BJ (cell line): ENCODE measurements at regions of chr13 and their contacts with region 1.

Region 1: DNA sequence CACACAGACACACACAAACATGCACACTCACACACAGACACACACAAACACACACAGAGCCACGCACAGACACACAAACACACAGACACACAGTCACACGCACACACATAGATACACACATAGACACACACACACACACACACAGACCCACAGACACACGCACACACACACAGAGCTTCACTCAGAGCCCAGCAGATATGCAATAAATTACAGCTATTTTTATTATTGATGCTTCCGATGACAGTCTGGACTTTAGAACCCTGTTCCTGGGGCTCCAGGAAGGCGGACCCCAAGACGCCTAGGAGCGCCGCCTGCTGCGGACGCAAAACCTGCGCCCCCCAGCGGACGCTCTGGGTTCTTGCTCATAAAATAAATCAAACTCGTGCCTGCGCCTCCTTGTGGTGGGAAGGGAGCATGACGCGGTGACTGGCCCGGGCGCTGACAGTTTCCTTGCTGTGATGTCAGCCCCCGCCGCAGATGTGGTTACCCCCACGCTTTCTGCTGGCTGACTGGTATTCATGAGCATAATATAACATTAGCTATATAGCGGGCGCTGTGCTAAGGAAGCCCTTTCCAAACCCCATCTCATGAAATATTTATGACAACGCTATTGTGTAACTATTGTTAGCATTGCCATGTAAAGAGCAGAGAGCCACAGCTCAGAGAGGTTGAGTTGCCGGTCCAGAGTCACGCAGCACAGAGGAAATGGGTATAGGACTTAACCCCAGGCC is 64.4 kb upstream of the TM9SF2 start:
- DNase-seq: no peak
- H3K4me3 ChIP-seq: no peak overlapping the region
- H3K27me3 ChIP-seq: peaks cover 11% of the 10 kb centered on the region
- CTCF ChIP-seq: peak; percentile 100

Region 2: GRCh38 chr13:99269627-99270241 is 167.1 kb before region 1 on chr13:
- CTCF ChIA-PET with region 1: interaction called, 283 read pairs
- POLR2A ChIA-PET with region 1: no interaction called
- DNase-seq: no peak
- H3K4me3 ChIP-seq: no peak overlapping the region
- H3K27me3 ChIP-seq: no peaks in the 10 kb centered on the region
- CTCF ChIP-seq: peak; percentile 74

Region 3: DNA sequence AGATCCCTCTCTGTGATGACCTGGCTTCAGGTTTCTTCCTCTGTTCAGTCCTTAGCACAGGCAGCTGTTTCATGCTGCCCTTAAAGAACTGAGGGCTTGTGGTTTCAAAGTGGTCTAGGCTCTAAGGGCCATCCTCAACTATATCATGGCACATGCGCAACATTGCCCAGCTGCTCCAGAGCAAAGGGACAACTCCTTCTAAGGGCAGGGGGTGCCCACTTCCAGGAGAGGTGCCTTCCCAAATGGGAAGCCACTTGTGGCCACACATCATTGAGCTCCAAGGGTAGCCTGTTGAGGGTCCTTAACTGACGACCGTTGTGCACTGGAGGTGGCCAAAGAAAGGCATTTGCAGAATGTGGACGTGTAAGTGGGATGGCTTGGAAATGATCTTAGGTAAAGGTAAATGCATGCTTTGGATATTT is 136.9 kb before region 1 on chr13:
- CTCF ChIA-PET with region 1: interaction called, 14 read pairs
- POLR2A ChIA-PET with region 1: no interaction called
- DNase-seq: no peak
- H3K4me3 ChIP-seq: no peak overlapping the region
- H3K27me3 ChIP-seq: no peaks in the 10 kb centered on the region
- CTCF ChIP-seq: no peak

Region 4: DNA sequence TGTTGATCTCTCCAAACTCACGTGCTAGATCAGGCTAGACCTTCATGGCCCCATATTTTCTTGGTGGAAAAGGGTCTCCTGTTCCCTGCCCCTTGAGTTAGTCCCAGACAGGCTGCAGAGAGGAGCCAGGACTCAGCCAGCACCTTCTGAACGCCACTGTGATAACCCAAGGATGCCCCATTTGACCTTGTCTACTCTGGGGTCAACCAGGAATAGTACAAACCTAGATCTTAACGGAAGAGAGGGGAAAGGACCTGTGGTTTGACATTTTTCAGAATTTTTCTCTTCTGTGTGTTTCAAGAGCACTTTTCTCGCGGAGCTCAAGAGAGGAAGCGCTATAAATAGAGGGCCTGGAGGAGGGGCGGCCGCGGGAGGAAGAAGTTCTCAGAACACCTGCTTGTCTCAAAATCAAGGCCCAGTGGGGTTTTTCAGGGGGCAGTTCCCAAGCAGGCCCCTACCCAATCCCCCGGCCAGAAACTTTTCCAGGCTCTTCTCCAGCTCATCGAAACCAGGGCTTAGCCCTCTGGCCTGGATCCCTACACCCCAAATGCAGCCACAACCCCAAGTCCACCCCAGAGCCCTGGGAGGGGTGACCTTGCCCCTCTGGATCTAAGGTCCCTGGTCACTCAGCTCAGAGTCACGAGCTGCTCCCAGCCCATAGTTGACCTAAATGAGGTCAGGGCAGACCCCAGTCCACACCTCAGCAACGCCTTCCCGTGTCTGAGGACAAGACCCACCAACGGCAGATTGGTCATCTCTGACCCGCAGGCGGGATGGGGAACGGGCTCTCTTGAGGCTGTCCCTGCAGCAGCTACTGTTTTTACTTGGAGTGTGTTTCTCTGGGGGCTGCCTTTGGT is 11.1 kb before region 1 on chr13:
- CTCF ChIA-PET with region 1: interaction called, 27 read pairs
- POLR2A ChIA-PET with region 1: no interaction called
- DNase-seq: no peak
- H3K4me3 ChIP-seq: no peak overlapping the region
- H3K27me3 ChIP-seq: peaks cover 16% of the 10 kb centered on the region
- CTCF ChIP-seq: no peak

Region 5: DNA sequence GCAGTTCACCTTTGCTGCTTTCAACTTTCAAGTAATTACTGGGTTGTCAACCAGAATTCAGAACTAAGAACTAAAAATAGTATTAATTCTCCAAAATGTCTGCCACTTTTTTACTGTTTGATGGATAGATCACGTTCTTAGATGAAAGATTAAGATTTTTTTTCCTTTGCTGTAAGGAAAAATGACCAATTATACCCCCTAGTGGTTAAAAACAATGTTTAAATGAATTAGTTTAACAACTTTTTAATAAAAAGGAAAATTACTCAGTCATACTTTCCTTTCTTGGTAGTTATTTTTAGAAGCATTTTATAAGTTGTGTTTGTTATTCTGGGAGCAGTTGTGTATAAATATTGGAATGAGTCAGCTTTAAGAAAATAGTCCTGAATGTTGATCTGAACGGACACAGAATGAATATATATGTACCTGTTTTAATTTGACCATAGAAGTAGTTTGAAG is 69.0 kb after region 1 on chr13:
- CTCF ChIA-PET with region 1: interaction called, 24 read pairs
- POLR2A ChIA-PET with region 1: no interaction called
- DNase-seq: no peak
- H3K4me3 ChIP-seq: no peak overlapping the region
- H3K27me3 ChIP-seq: no peaks in the 10 kb centered on the region
- CTCF ChIP-seq: peak; percentile 30; the same call in 1 of the 2 replicates

Region 6: DNA sequence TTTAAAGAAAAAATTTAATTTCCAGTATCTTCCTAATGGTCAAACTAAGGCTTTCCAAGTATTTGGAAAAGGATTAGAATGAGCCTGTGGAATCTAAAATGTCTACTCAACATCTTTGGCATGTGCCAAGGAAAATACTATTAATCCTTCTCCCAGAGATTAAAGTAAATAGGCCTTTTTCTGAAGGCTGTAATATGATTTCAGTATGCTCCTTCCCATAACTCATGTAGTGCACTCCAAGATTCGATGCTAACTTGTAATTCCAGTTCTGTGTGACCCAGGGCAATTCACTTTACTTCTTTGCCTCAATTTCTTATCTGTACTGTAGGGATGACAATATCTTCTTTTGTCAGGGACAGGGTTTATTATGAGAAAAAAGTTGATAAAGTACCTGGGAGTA is 337.8 kb after region 1 on chr13:
- CTCF ChIA-PET with region 1: no interaction called
- POLR2A ChIA-PET with region 1: no interaction called
- DNase-seq: no peak
- H3K4me3 ChIP-seq: no peak overlapping the region
- H3K27me3 ChIP-seq: no peaks in the 10 kb centered on the region
- CTCF ChIP-seq: no peak